Endothelial cell of umbilical vein (primary cell): ENCODE measurements at regions of chr2 and their contacts with region 1.

Region 1: DNA sequence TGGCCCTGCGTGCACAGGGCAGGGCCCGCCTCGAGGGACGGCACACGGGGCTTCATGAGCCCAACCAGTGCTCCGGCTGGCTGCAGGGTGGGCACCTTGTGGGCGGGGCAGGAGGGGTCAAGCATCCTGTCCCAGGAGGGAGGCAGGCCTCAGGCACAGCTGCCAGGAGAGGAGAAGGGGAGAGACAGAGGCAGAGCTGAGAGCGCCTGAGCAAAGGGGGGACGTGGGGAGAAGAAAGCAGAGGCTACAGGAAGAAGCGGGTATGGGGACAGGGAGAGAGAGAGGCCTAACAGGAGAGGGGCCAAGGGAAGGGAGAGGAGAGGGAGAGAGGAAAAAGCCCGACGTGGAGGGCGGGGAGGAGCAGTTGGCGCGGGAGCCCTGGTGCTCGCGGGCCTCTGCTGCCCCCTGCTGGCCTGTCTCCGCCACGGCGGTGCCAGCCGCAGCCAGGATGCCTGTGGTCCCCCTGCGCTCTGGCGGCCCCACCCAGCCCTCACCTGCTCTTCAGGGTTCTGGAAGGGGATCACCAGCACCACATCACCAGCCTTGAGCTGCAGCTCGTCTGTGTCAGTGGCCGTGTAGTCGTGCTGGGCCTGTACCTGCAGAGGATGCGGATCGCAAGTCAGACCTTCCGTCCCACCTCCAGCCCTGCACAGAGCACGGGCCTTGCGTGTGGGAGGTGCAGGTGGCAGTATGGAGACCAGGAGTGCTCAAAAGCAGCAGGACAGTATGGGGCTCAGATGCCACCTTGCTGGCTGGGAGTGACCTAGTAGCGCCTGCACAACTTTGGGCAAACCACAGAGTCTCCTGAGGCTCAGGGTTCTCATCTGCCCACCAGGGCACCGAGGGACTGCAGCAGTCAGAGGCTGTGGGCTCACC is 56.8 kb downstream of the BIN1 start:
- DNase-seq: peak; percentile 34
- H3K4me3 ChIP-seq: no peak overlapping the region
- H3K27ac ChIP-seq: no peak overlapping the region
- H3K4me1 ChIP-seq: no peaks in the 10 kb centered on the region
- H3K27me3 ChIP-seq: no peaks in the 10 kb centered on the region
- CTCF ChIP-seq: peak; percentile 78 to 99
- POLR2A ChIP-seq: no peak

Region 2: DNA sequence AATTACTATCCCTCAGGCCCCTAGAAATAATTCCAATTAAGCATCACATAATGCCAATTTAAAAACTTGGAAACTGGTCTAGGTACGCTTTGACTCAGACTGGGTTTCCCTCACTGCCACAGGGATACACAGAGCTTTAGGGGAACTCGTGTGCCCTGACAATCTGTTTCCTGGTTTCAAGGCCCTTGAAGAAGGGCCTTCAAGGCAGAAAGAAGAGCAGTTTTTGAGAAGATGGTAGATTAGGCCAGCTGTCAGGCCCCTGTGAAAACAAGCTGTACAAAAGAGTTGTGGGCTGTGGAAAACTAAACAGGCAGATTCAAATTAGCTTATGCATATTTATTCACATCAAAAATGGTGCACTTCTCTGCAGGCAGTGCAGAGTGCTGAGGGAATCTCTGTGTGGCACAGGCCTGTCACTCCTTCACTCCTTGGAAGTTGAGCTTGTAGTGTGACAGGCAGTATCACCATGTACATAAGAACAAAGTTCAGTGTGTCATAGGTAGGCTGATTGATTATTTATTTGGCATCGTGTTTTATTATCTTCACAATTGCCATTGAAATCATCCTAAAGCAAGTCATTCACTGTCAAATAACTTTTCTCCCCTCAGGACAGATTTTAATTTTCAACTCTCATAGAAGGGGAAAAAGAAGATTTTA is 1008.6 kb before region 1 on chr2:
- CTCF ChIA-PET with region 1: no interaction called
- POLR2A ChIA-PET with region 1: no interaction called
- dilution Hi-C with region 1: no loop called
- intact Hi-C with region 1: no loop called
- DNase-seq: no peak
- H3K4me3 ChIP-seq: no peak overlapping the region
- H3K27ac ChIP-seq: no peak overlapping the region
- H3K4me1 ChIP-seq: no peaks in the 10 kb centered on the region
- H3K27me3 ChIP-seq: no peaks in the 10 kb centered on the region
- CTCF ChIP-seq: no peak
- POLR2A ChIP-seq: no peak

Region 3: GRCh38 chr2:126886211-126886915 is 163.8 kb before region 1 on chr2:
- CTCF ChIA-PET with region 1: no interaction called
- POLR2A ChIA-PET with region 1: no interaction called
- dilution Hi-C with region 1: no loop called
- intact Hi-C with region 1: loop called (anchors 1 kb)
- DNase-seq: peak; percentile 28
- H3K4me3 ChIP-seq: no peak overlapping the region
- H3K27ac ChIP-seq: no peak overlapping the region
- H3K4me1 ChIP-seq: no peaks in the 10 kb centered on the region
- H3K27me3 ChIP-seq: no peaks in the 10 kb centered on the region
- CTCF ChIP-seq: peak; percentile 60 to 69
- POLR2A ChIP-seq: no peak

Region 4: GRCh38 chr2:126971481-126972278 is 78.5 kb before region 1 on chr2:
- CTCF ChIA-PET with region 1: interaction called, 18 read pairs
- POLR2A ChIA-PET with region 1: no interaction called
- dilution Hi-C with region 1: no loop called
- intact Hi-C with region 1: loop called (anchors 1 kb)
- DNase-seq: peak; percentile 63
- H3K4me3 ChIP-seq: peak overlapping the region in 1 of 3 experiments; percentile 10
- H3K27ac ChIP-seq: no peak overlapping the region
- H3K4me1 ChIP-seq: no peaks in the 10 kb centered on the region
- H3K27me3 ChIP-seq: peaks cover 11% of the 10 kb centered on the region in 2 experiments
- CTCF ChIP-seq: peak; percentile 85 to 98
- POLR2A ChIP-seq: no peak

Region 5: GRCh38 chr2:127025359-127026166 is 24.6 kb before region 1 on chr2:
- CTCF ChIA-PET with region 1: no interaction called
- POLR2A ChIA-PET with region 1: no interaction called
- dilution Hi-C with region 1: no loop called
- intact Hi-C with region 1: loop called (anchors 1 kb)
- DNase-seq: peak; percentile 50
- H3K4me3 ChIP-seq: peak overlapping the region; percentile 20 to 59 (median 40)
- H3K27ac ChIP-seq: no peak overlapping the region
- H3K4me1 ChIP-seq: peaks cover 13% of the 10 kb centered on the region
- H3K27me3 ChIP-seq: peaks cover 4 to 18% of the 10 kb centered on the region in 2 experiments
- CTCF ChIP-seq: peak; percentile 42 to 50
- POLR2A ChIP-seq: no peak